A673 (cell line): ENCODE measurements at regions of chr18 and their contacts with region 1.

Region 1: GRCh38 chr18:48933578-48934414 is 17.0 kb downstream of the SMAD7 start:
- DNase-seq: no peak
- H3K4me3 ChIP-seq: no peak overlapping the region
- H3K27ac ChIP-seq: peak overlapping the region; percentile 88
- H3K4me1 ChIP-seq: peaks cover 86% of the 10 kb centered on the region
- H3K27me3 ChIP-seq: no peaks in the 10 kb centered on the region
- CTCF ChIP-seq: no peak

Region 2: GRCh38 chr18:48979944-48980890 is 46.4 kb after region 1 on chr18:
- CTCF ChIA-PET with region 1: no interaction called
- POLR2A ChIA-PET with region 1: interaction called, 19 read pairs
- intact Hi-C with region 1: no loop called
- DNase-seq: no peak
- H3K4me3 ChIP-seq: no peak overlapping the region
- H3K27ac ChIP-seq: no peak overlapping the region
- H3K4me1 ChIP-seq: peaks cover 12% of the 10 kb centered on the region
- H3K27me3 ChIP-seq: no peaks in the 10 kb centered on the region
- CTCF ChIP-seq: no peak